ENCODE measurements at regions of chr11 and their contacts with region 1.

Region 1: GRCh38 chr11:100849009-100849900 is 162.2 kb downstream of the ARHGAP42 start:
- DNase-seq: no peak

Region 2: DNA sequence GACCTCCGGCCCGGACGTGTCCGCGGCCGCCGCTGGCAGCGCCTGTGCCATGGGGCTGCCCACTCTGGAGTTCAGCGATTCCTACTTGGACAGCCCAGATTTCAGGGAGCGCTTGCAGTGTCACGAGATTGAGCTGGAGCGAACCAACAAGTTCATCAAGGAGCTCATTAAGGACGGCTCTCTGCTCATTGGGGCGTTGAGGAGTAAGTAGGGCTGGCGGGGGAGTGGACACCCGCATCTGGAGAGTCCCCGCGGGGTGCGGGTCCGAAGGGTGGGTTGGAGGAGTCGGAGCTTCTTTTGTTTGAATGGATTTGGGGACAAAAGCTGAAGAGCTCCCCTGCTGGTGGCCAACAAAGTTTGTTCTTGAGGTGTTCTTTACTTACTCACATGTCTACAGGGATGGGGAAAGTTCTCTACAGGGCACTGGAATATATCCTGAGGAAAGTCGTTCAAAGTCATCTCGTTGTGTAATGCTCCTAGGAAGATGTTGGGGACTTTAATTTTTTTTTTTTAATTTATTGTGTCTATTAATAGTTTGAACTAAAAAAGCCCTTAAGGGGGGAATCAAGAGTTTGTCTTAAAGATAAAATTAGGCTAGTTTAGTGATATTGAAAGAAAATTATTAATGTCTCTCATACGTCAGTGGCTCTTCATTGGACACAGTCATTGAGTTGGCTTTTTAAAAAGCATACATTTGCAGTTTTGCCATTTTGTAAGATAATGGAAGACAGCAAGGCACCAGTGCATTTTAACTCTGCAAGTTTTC is 161.4 kb before region 1 on chr11:
- intact Hi-C with region 1: loop called in 1 of 2 experiments (anchors 10 kb)
- DNase-seq: no peak

Region 3: GRCh38 chr11:100817620-100818019 is 31.6 kb before region 1 on chr11:
- intact Hi-C with region 1: no loop called
- DNase-seq: no peak

Region 4: DNA sequence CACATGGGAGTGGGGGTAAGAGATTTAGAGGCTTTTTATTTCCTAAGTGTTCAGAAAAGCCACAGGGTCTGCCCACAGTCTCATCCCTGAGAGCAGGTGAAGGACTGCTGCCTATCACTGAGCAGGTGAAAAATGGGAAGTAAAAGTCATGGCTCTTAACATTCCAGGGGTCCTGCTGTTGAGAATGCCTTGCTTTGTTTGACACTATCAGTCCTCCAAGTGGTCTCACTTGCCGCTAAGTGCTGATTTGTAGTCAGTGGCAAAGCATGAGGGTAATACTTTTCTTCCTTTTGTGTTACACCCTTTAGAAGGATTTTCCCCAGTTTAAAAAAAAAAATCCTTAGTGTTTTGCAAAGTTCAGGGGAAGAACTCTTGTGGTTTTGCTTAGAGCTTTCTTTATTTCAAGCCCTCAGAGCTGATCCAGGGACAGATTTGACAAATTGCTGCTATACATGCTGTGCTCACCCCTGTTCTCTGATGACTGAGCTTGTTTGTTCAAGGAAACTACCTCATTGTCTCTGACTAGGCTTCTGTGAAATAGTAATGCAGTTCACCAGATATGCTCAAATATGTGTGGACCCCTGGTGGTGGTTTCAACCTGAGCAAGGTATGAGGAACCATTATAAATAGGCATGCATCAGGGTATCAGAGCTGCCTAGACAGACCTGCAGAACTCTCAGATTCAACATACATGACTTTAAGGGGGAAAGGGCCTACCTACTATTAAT is 21.2 kb before region 1 on chr11:
- intact Hi-C with region 1: no loop called
- DNase-seq: no peak

Region 5: GRCh38 chr11:100876815-100877520 is 27.7 kb after region 1 on chr11:
- intact Hi-C with region 1: loop called in 1 of 2 experiments (anchors 1 kb)
- DNase-seq: no peak